ENCODE measurements at regions of chr19 and their contacts with region 1.

Region 1: GRCh38 chr19:40702337-40703012 is 12.0 kb upstream of the NUMBL start:
- DNase-seq: peak; percentile 78
- ATAC-seq: peak; percentile 95
- H3K4me3 Mint-ChIP-seq: no peak overlapping the region
- H3K27ac Mint-ChIP-seq: peak overlapping the region; percentile 85
- H3K4me1 Mint-ChIP-seq: peaks cover 8% of the 10 kb centered on the region; the same call in 1 of the 2 replicates
- H3K27me3 Mint-ChIP-seq: no peaks in the 10 kb centered on the region
- CTCF ChIP-seq: peak; percentile 18; the same call in 1 of the 2 replicates

Region 2: GRCh38 chr19:40616941-40617340 is 85.5 kb before region 1 on chr19:
- CTCF ChIA-PET with region 1: no interaction called
- POLR2A ChIA-PET with region 1: no interaction called
- DNase-seq: no peak
- ATAC-seq: no peak
- H3K4me3 Mint-ChIP-seq: no peak overlapping the region
- H3K27ac Mint-ChIP-seq: no peak overlapping the region
- H3K4me1 Mint-ChIP-seq: peaks cover 11% of the 10 kb centered on the region; the same call in 1 of the 2 replicates
- H3K27me3 Mint-ChIP-seq: peaks cover 15% of the 10 kb centered on the region
- CTCF ChIP-seq: no peak

Region 3: DNA sequence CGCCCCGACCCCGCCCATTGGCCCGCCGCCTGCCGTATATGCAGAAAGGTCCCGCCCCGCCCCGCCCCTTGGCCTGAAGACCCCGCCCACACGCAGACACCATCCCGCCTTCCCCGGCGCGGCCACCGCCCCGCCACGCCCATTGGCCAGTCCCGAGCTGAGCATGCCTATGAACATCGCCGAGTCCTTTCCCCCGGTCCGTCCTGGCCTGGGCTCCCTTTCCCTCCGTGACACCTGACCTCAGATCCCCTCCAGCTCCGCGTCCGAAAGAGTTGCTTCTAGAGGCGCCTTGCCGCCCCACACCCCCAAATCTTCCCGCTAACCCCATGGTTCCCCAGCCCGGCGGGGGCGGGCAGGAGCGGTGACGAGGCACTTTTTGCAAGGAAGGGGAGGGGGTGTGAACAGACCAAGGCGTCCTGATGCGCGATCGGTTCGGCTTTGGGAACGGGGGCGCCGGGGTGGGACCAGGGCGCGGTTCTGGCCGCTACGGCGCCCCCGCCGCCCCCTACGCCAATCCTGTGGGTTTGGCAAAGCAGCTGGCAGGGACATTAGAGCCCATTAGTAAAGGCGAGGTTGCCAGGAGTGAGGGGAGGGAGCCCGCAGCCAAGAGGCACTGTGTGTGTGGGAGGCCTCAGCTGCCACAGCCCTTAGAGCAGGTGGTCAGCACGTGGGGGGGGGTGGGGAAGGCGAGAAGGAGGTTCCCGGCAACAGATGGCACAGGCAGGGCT is 11.6 kb before region 1 on chr19:
- CTCF ChIA-PET with region 1: interaction called, 41 read pairs
- POLR2A ChIA-PET with region 1: interaction called, 3 read pairs
- DNase-seq: peak; percentile 91
- ATAC-seq: peak; percentile 83
- H3K4me3 Mint-ChIP-seq: peak overlapping the region; percentile 86
- H3K27ac Mint-ChIP-seq: peak overlapping the region; percentile 95
- H3K4me1 Mint-ChIP-seq: peaks cover 6% of the 10 kb centered on the region
- H3K27me3 Mint-ChIP-seq: no peaks in the 10 kb centered on the region
- CTCF ChIP-seq: no peak

Region 4: DNA sequence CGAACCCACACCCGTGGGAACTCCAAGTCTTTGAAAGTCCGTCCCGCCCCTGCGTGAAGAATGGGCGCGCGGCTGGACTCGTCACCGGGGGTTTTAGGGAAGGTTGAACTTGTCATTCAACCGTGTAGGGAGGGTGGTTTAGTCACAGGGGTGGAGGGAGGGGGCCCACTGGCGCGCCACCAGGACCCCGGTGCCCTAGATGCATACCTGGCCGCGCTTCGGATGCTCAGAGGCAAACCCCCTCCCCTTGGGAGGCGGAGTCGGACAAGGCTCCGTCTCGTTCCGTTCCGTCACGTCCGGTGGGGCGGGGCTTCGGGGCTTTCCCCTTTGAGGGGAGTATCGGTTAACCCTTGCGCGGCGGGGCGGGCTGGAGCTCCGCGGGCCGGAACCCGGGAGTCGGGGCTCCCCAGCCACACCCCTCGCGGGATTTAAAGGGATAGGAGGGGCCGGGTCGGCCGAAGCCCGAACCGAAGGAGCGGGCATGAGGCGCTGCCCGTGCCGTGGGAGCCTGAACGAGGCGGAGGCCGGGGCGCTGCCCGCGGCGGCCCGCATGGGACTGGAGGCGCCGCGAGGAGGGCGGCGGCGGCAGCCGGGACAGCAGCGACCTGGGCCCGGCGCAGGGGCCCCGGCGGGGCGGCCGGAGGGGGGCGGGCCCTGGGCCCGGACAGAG is 14.3 kb after region 1 on chr19 and contains the starts of genes COQ8B and ITPKC:
- CTCF ChIA-PET with region 1: interaction called, 14 read pairs
- POLR2A ChIA-PET with region 1: interaction called, 3 read pairs
- DNase-seq: peak; percentile 100
- ATAC-seq: peak; percentile 55
- H3K4me3 Mint-ChIP-seq: peak within 1 kb of the TSS; percentile 98
- H3K27ac Mint-ChIP-seq: peak within 1 kb of the TSS; percentile 99
- H3K4me1 Mint-ChIP-seq: peaks cover 33% of the 10 kb centered on the region
- H3K27me3 Mint-ChIP-seq: no peaks in the 10 kb centered on the region
- CTCF ChIP-seq: no peak
- total RNA-seq, gene COQ8B: 55.6 to 62.9 TPM (median 59.9 TPM) in 3 replicates
- total RNA-seq, gene ITPKC: 10.4 to 13.8 TPM (median 10.6 TPM) in 3 replicates

Region 5: GRCh38 chr19:40744554-40745401 is 42.3 kb after region 1 on chr19:
- CTCF ChIA-PET with region 1: interaction called, 20 read pairs
- POLR2A ChIA-PET with region 1: no interaction called
- DNase-seq: peak; percentile 54
- ATAC-seq: peak; percentile 59
- H3K4me3 Mint-ChIP-seq: no peak overlapping the region
- H3K27ac Mint-ChIP-seq: peak overlapping the region; percentile 72
- H3K4me1 Mint-ChIP-seq: peaks cover 25% of the 10 kb centered on the region
- H3K27me3 Mint-ChIP-seq: no peaks in the 10 kb centered on the region
- CTCF ChIP-seq: 0 out of 2 replicates have a peak, but pooled peaks have one; percentile 26

Region 6: GRCh38 chr19:40858109-40858508 is 155.6 kb after region 1 on chr19:
- CTCF ChIA-PET with region 1: no interaction called
- POLR2A ChIA-PET with region 1: no interaction called
- DNase-seq: no peak
- ATAC-seq: no peak
- H3K4me3 Mint-ChIP-seq: no peak overlapping the region
- H3K27ac Mint-ChIP-seq: no peak overlapping the region
- H3K4me1 Mint-ChIP-seq: no peaks in the 10 kb centered on the region
- H3K27me3 Mint-ChIP-seq: no peaks in the 10 kb centered on the region
- CTCF ChIP-seq: no peak